CD8-positive, alpha-beta T cell (primary cell): ENCODE measurements at regions of chr10 and their contacts with region 1.

Region 1: DNA sequence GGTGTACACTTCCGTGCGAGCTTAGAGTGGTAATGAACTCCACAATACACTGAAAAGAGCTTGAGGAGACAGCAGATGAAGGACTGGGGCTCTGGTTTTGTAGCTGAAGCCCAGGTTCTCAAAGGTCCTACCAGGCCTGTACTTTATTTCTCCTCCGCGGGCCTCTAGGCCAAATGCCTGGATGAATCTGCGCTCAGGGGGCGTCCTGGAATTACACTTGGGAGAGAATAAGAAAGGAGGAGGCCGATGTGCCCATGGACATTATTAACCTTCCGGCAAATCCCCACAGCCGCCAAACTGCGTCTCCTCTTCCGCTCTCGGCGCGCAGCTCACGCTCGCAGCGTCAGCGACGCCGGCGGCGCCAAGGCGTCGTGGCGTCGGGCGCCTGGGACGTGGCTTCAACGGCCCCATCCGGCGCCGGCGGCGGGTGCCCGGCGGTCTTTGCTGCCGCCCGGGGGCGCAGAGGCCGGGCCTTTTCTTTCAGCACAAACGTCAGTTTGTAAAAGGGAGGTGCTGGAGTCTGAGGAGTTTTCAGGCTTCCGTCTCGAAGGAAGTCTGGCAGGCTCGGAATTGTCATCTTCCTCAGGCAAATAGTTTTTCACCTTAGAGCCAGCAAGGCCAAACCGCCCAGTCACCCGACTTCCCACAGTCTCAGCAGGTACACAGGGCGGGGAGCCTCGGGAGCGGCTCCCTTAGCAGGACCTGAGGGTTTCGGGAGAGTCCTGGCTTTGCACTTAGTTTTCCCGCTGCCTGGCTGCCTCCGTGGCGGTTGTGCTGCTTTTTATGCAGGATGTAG is at the start of gene CCDC7:
- DNase-seq: peak; percentile 73 to 96 (median 83)
- ATAC-seq: peak; percentile 95
- H3K4me3 ChIP-seq: peak within 1 kb of the TSS; percentile 68 to 99
- H3K4me3 Mint-ChIP-seq: peak within 1 kb of the TSS; percentile 94
- H3K27ac ChIP-seq: peak within 1 kb of the TSS; percentile 91 to 98
- H3K27ac Mint-ChIP-seq: peak within 1 kb of the TSS; percentile 100
- H3K4me1 ChIP-seq: peaks cover 4% of the 10 kb centered on the region
- H3K4me1 Mint-ChIP-seq: peaks cover 28% of the 10 kb centered on the region
- H3K27me3 ChIP-seq: no peaks in the 10 kb centered on the region
- H3K27me3 Mint-ChIP-seq: no peaks in the 10 kb centered on the region
- CTCF ChIP-seq: peak; percentile 45
- total RNA-seq, gene CCDC7: 50.1 to 59.0 TPM

Region 2: GRCh38 chr10:31318854-31319601 is 1126.9 kb before region 1 on chr10 and contains the start of gene ZEB1:
- CTCF ChIA-PET with region 1: no interaction called
- POLR2A ChIA-PET with region 1: no interaction called
- intact Hi-C with region 1: loop called in 1 of 2 experiments (anchors 2 kb)
- DNase-seq: peak; percentile 83 to 97 (median 90)
- ATAC-seq: peak; percentile 42
- H3K4me3 ChIP-seq: peak within 1 kb of the TSS; percentile 92 to 95
- H3K4me3 Mint-ChIP-seq: peak within 1 kb of the TSS; percentile 100
- H3K27ac ChIP-seq: peak within 1 kb of the TSS; percentile 90 to 95
- H3K27ac Mint-ChIP-seq: peak within 1 kb of the TSS; percentile 100
- H3K4me1 ChIP-seq: peaks cover 28% of the 10 kb centered on the region
- H3K4me1 Mint-ChIP-seq: peaks cover 39% of the 10 kb centered on the region
- H3K27me3 ChIP-seq: no peaks in the 10 kb centered on the region
- H3K27me3 Mint-ChIP-seq: no peaks in the 10 kb centered on the region
- CTCF ChIP-seq: no peak
- total RNA-seq, gene ZEB1: 145 to 153 TPM

Region 3: GRCh38 chr10:32055813-32056600 is 389.9 kb before region 1 on chr10 and contains the start of gene KIF5B:
- CTCF ChIA-PET with region 1: no interaction called
- POLR2A ChIA-PET with region 1: no interaction called
- intact Hi-C with region 1: loop called (anchors 5 to 10 kb)
- DNase-seq: peak; percentile 69 to 93 (median 84)
- ATAC-seq: peak; percentile 79
- H3K4me3 ChIP-seq: peak within 1 kb of the TSS; percentile 74 to 89
- H3K4me3 Mint-ChIP-seq: peak within 1 kb of the TSS; percentile 96
- H3K27ac ChIP-seq: peak within 1 kb of the TSS; percentile 66 to 89
- H3K27ac Mint-ChIP-seq: peak within 1 kb of the TSS; percentile 94
- H3K4me1 ChIP-seq: peaks cover 41% of the 10 kb centered on the region
- H3K4me1 Mint-ChIP-seq: peaks cover 51% of the 10 kb centered on the region
- H3K27me3 ChIP-seq: no peaks in the 10 kb centered on the region
- H3K27me3 Mint-ChIP-seq: no peaks in the 10 kb centered on the region
- CTCF ChIP-seq: no peak
- total RNA-seq, gene KIF5B: 53.2 to 53.8 TPM

Region 4: DNA sequence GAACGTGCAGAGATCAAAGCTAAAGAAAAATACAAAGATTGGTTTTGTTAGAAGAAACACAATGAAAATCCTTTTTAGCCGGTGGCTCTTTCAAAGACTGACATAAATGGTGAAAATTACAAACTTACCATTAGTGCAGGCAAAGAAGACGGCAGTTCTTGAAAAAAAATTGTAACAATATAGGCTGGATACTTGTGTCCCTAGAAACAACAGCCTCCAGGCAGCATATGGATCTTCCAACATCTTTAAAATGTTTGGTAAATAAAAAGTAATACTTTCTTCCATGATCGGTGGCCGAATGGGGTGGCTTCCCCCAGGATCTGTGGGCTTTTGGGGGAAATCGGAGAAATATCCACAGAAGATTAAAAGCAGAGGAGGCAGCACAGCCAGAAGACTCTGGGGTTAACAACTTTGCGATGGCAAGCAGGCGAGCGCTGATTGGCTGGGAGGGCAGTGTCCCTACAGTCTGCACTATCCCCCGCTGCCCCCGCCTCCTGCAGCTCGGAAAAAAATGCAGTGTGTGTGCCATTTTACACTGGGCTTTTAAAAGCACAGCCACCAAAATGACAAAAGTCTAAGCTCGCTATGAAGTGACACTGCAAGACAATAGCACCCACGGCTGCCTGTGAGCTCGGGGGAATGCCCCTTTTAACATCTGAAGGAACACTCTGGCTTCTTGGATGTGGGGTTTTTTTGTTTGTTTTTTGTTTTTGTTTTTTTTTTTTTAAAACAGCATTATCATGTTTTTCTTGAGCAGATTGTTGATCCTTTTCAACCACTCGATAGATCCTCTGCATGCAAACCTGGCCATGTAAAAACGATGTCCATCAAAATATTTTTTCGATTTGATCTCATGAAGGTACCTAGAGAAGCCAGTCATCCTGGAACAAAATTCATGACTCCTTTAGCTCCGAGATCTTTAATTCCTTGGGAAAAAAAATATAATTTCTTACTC is 67.3 kb before region 1 on chr10:
- CTCF ChIA-PET with region 1: interaction called, 11 read pairs
- POLR2A ChIA-PET with region 1: interaction called, 35 read pairs
- intact Hi-C with region 1: loop called (anchors 1 to 2 kb)
- DNase-seq: peak; percentile 86 to 96 (median 93)
- ATAC-seq: peak; percentile 88
- H3K4me3 ChIP-seq: peak overlapping the region; percentile 72 to 84
- H3K4me3 Mint-ChIP-seq: no peak overlapping the region
- H3K27ac ChIP-seq: peak overlapping the region; percentile 68 to 72
- H3K27ac Mint-ChIP-seq: no peak overlapping the region
- H3K4me1 ChIP-seq: peaks cover 19% of the 10 kb centered on the region
- H3K4me1 Mint-ChIP-seq: peaks cover 26% of the 10 kb centered on the region
- H3K27me3 ChIP-seq: no peaks in the 10 kb centered on the region
- H3K27me3 Mint-ChIP-seq: no peaks in the 10 kb centered on the region
- CTCF ChIP-seq: no peak

Region 5: GRCh38 chr10:32692174-32692573 is 246.2 kb after region 1 on chr10:
- CTCF ChIA-PET with region 1: no interaction called
- POLR2A ChIA-PET with region 1: no interaction called
- intact Hi-C with region 1: no loop called
- DNase-seq: no peak
- ATAC-seq: no peak
- H3K4me3 ChIP-seq: no peak overlapping the region
- H3K4me3 Mint-ChIP-seq: no peak overlapping the region
- H3K27ac ChIP-seq: no peak overlapping the region
- H3K27ac Mint-ChIP-seq: no peak overlapping the region
- H3K4me1 ChIP-seq: no peaks in the 10 kb centered on the region
- H3K4me1 Mint-ChIP-seq: no peaks in the 10 kb centered on the region
- H3K27me3 ChIP-seq: no peaks in the 10 kb centered on the region
- H3K27me3 Mint-ChIP-seq: no peaks in the 10 kb centered on the region
- CTCF ChIP-seq: no peak

Region 6: DNA sequence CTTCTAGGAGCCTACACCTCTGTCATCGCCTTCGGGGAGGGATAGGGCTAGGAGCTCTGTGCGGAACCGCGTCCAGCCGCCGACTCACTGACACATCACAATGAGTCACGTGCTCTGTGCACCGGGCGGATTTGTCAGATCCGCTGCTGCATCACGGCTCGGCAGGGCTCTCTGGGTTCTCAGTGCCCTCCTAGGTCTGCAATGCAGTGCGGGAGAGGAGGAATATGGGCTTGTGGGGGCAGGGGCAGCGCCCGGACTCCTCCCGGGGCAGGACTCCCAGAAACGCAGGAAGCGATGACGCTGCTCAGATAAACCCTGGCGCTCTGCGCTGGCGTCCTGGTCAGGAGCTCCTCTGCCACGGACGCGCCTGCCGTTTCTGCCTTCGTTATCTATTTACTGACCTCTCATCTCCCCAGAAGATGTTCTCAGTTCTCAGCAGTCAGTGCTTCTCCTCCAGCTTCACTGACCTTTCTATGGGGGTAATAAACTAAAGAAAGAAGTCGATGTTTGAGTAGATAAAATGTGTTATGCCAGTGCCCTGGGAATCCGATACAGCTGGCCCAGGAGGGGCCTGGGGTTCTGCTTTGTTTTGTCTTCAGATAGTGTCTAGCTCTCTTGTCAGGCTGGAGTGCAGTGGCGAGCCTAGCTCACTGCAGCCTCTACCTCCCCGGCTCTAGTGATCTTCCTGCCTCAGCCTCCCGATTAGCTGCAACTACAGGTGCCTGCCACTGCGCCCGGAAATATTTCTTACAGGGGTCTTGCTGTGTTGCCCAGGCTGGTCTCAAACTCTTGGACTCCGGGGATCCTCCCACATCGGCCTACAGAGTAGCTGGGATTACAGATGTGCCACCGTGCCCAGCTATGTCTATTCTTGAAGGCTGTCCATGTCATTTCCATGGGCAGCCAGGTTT is 534.9 kb after region 1 on chr10:
- CTCF ChIA-PET with region 1: no interaction called
- POLR2A ChIA-PET with region 1: no interaction called
- intact Hi-C with region 1: loop called in 1 of 2 experiments (anchors 1 kb)
- DNase-seq: peak; percentile 61 to 91 (median 85)
- ATAC-seq: peak; percentile 90
- H3K4me3 ChIP-seq: peak overlapping the region; percentile 52 to 66
- H3K4me3 Mint-ChIP-seq: peak overlapping the region; percentile 96
- H3K27ac ChIP-seq: peak overlapping the region; percentile 68 to 94
- H3K27ac Mint-ChIP-seq: peak overlapping the region; percentile 97
- H3K4me1 ChIP-seq: peaks cover 25% of the 10 kb centered on the region
- H3K4me1 Mint-ChIP-seq: peaks cover 34% of the 10 kb centered on the region
- H3K27me3 ChIP-seq: no peaks in the 10 kb centered on the region
- H3K27me3 Mint-ChIP-seq: no peaks in the 10 kb centered on the region
- CTCF ChIP-seq: no peak